ENCODE measurements at regions of chr20 and their contacts with region 1.

Region 1: DNA sequence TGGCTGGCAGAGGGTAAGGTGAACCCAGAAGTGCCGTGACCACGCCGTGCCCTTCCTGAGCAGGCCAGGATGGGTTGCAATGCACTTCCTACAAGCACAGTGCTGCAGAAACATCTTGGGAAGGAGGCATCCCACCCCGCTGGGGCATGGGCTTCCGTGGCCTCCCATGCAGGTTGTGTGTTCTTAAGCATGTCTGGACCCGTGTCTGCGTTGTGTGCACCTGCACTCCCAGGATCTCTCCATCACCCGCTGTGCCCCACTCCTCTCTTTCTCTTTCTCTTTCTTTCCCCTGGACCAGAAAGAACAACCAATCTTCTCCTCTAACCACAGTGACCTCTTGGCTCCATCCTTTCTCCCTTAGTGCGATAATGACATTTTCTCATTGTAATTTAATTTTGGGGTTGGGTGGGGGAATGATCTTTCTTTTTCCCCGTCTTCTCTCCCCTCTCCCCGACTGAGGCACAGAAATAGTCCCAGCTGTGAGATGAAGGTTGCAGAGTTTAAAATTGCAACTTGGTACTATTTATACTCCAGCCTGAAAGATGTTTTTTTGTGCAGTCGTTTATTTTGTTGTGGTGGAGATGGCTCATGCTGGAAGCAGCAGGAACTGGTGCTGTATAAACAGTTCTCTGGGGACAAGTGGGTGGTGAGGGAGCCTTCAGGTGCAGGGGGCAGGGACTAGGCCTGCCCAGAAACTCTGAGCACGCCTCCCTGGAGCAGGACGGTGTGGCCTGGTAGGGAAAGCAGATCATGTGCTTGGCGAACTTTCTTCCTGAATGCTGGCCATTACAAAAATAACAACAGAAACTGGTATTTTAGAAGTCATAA is 20.5 kb downstream of the BCAS4 start:
- DNase-seq: no peak
- H3K4me3 ChIP-seq: no peak overlapping the region
- H3K27ac ChIP-seq: no peak overlapping the region
- H3K4me1 ChIP-seq: no peaks in the 10 kb centered on the region
- H3K27me3 ChIP-seq: no peaks in the 10 kb centered on the region
- CTCF ChIP-seq: no peak
- POLR2A ChIP-seq: no peak

Region 2: DNA sequence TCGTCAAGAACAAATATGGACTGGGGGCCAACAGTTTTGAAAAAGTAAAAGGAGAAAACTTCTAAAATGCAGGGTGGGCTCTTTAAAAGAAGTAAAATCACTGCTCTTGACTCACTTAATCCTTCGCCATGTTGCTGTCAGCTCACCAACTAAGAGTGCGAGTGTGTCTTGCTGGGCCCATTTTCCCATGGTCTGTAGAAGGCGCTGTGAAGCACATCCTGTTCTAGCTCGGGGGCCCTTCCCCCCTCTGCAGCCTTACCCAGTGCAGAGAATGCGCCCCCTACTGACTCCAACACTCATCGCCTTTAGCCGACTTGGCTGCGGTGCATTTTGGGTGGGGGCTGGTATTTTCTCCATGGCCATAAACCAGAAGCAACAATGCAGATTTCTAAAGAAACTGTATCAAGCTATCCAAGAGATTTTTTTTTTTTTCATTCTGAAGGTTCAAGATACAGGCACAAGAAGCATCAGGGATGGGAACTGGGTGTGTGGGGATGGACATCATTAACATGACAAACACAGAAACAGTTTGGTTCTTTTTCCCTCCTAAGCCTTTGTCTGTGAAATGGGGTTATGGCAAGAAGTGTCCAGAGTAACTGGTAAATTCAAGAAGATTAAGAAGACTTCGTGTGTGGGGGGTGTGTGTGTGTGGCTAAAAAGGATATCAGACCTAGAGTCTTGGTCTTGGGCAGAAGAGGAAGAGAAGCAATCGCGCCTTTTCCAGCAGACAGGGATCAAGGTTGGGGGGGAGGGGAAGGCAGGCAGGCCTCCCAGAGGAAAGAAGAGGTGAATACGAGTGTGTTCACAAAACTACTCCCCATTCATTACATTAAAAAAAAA is 114.1 kb after region 1 on chr20:
- intact Hi-C with region 1: loop called (anchors 5 to 10 kb)
- DNase-seq: peak; percentile 85 to 97 (median 94)
- H3K4me3 ChIP-seq: peak overlapping the region in 2 of 4 donors; percentile 67 to 78
- H3K27ac ChIP-seq: peak overlapping the region in 4 of 5 donors; percentile 54 to 91 (median 68)
- H3K4me1 ChIP-seq: peaks cover 7 to 56% of the 10 kb centered on the region in 2 donors
- H3K27me3 ChIP-seq: no peaks in the 10 kb centered on the region
- CTCF ChIP-seq: peak; percentile 70 to 96 (median 88)
- POLR2A ChIP-seq: peak in 1 of 2 donors; percentile 21